ENCODE measurements at regions of chr11 and their contacts with region 1.

Region 1: GRCh38 chr11:66883016-66883968 is 26.4 kb downstream of the LRFN4 start:
- DNase-seq: peak; percentile 80
- H3K4me3 ChIP-seq: peak overlapping the region; percentile 25
- H3K27ac ChIP-seq: no peak overlapping the region
- H3K4me1 ChIP-seq: peaks cover 33% of the 10 kb centered on the region
- H3K27me3 ChIP-seq: no peaks in the 10 kb centered on the region
- CTCF ChIP-seq: peak; percentile 95

Region 2: DNA sequence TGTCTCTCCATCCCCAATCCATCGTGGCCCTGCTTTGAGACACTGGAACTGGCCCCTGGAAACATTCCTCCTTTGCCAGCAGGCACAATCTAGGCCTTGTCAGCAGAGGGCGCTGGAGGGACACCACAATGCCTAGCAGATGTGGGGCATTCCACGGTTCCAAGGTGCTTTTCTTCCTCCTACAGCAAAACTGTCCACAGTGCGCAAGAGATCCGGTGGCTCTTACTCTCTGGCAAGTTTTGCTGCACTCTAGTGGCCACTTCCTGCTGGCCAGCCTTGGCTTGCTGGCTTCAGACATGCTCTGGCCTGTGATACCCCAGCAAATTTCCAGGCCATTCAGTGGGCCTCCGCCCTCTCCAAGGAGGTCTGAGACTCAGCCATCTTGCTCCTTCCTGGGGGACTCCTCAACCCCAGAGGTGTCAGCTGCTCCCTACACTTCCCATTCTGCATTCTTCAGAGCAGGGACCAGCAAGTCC is 188.5 kb before region 1 on chr11:
- CTCF ChIA-PET with region 1: no interaction called
- POLR2A ChIA-PET with region 1: no interaction called
- intact Hi-C with region 1: loop called (anchors 1 kb)
- DNase-seq: peak; percentile 95
- H3K4me3 ChIP-seq: no peak overlapping the region
- H3K27ac ChIP-seq: no peak overlapping the region
- H3K4me1 ChIP-seq: no peaks in the 10 kb centered on the region
- H3K27me3 ChIP-seq: no peaks in the 10 kb centered on the region
- CTCF ChIP-seq: peak; percentile 99

Region 3: DNA sequence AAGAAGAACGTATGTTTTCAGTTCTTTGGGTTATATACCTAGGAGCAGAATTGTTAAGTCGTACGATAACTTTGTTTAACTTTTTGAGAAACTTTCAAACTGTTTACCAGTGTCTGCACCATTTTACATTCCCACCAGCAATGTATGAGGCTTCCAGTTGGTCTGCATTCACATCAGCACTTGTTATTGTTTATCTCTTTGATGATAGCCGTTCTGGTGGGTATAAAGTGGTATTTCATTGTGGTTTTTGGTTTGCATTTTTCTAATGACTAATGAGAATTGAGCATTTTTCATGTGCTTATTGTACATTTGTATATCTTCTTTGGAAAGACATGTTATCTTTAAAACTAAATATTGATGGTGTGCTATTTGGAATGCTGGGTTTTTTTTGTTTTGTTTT is 295.6 kb after region 1 on chr11:
- CTCF ChIA-PET with region 1: no interaction called
- POLR2A ChIA-PET with region 1: no interaction called
- intact Hi-C with region 1: no loop called
- DNase-seq: no peak
- H3K4me3 ChIP-seq: no peak overlapping the region
- H3K27ac ChIP-seq: no peak overlapping the region
- H3K4me1 ChIP-seq: peaks cover 9% of the 10 kb centered on the region
- H3K27me3 ChIP-seq: no peaks in the 10 kb centered on the region
- CTCF ChIP-seq: no peak

Measured in A673 (cell line).